CD4-positive, alpha-beta T cell (primary cell): ENCODE measurements at regions of chr9 and their contacts with region 1.

Region 1: DNA sequence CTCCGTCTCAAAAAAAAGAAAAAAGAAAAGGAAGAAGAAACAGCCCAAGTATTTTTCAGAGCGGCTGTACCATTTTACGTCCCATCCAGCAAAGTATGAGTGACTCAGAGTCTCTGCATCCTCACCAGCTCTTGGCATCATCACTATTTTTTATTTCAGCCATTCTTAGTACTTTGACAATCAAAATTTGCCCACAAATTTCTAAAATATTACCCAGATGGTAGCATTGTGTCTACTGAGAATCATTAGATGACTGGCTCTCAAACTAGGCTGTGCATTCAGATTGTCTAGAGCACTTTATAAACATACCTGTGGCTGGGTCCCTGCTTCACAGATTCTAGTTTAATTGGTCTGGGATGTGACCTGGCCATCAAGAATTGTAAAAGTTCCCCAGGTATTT is 21.6 kb upstream of the MELK start:
- DNase-seq: no peak
- ATAC-seq: no peak
- H3K4me3 ChIP-seq: no peak overlapping the region
- H3K4me3 Mint-ChIP-seq: no peak overlapping the region
- H3K27ac ChIP-seq: no peak overlapping the region
- H3K27ac Mint-ChIP-seq: no peak overlapping the region
- H3K4me1 ChIP-seq: no peaks in the 10 kb centered on the region
- H3K4me1 Mint-ChIP-seq: peaks cover 5% of the 10 kb centered on the region
- H3K27me3 ChIP-seq: no peaks in the 10 kb centered on the region
- H3K27me3 Mint-ChIP-seq: peaks cover 5% of the 10 kb centered on the region
- CTCF ChIP-seq: no peak

Region 2: GRCh38 chr9:35882263-35882848 is 668.8 kb before region 1 on chr9:
- CTCF ChIA-PET with region 1: no interaction called
- POLR2A ChIA-PET with region 1: no interaction called
- intact Hi-C with region 1: no loop called
- DNase-seq: peak; percentile 68 to 90 (median 78)
- ATAC-seq: peak; percentile 64
- H3K4me3 ChIP-seq: no peak overlapping the region
- H3K4me3 Mint-ChIP-seq: no peak overlapping the region
- H3K27ac ChIP-seq: no peak overlapping the region
- H3K27ac Mint-ChIP-seq: no peak overlapping the region
- H3K4me1 ChIP-seq: no peaks in the 10 kb centered on the region
- H3K4me1 Mint-ChIP-seq: no peaks in the 10 kb centered on the region
- H3K27me3 ChIP-seq: no peaks in the 10 kb centered on the region
- H3K27me3 Mint-ChIP-seq: peaks cover 13% of the 10 kb centered on the region
- CTCF ChIP-seq: peak; percentile 98

Region 3: GRCh38 chr9:36499174-36499890 is 51.8 kb before region 1 on chr9:
- CTCF ChIA-PET with region 1: interaction called, 5 read pairs
- POLR2A ChIA-PET with region 1: no interaction called
- intact Hi-C with region 1: loop called in 1 of 2 experiments (anchors 5 kb)
- DNase-seq: no peak
- ATAC-seq: no peak
- H3K4me3 ChIP-seq: no peak overlapping the region
- H3K4me3 Mint-ChIP-seq: no peak overlapping the region
- H3K27ac ChIP-seq: no peak overlapping the region
- H3K27ac Mint-ChIP-seq: no peak overlapping the region
- H3K4me1 ChIP-seq: peaks cover 10% of the 10 kb centered on the region
- H3K4me1 Mint-ChIP-seq: peaks cover 37% of the 10 kb centered on the region
- H3K27me3 ChIP-seq: no peaks in the 10 kb centered on the region
- H3K27me3 Mint-ChIP-seq: no peaks in the 10 kb centered on the region
- CTCF ChIP-seq: no peak

Region 4: GRCh38 chr9:36637491-36638270 is 86.6 kb after region 1 on chr9:
- CTCF ChIA-PET with region 1: no interaction called
- POLR2A ChIA-PET with region 1: no interaction called
- intact Hi-C with region 1: no loop called
- DNase-seq: no peak
- ATAC-seq: no peak
- H3K4me3 ChIP-seq: no peak overlapping the region
- H3K4me3 Mint-ChIP-seq: no peak overlapping the region
- H3K27ac ChIP-seq: no peak overlapping the region
- H3K27ac Mint-ChIP-seq: no peak overlapping the region
- H3K4me1 ChIP-seq: no peaks in the 10 kb centered on the region
- H3K4me1 Mint-ChIP-seq: no peaks in the 10 kb centered on the region
- H3K27me3 ChIP-seq: no peaks in the 10 kb centered on the region
- H3K27me3 Mint-ChIP-seq: no peaks in the 10 kb centered on the region
- CTCF ChIP-seq: no peak